T-cell (primary cell): ENCODE measurements at regions of chr5 and their contacts with region 1.

Region 1: GRCh38 chr5:95646554-95647431 is at the start of gene RFESD:
- DNase-seq: peak; percentile 82 to 96 (median 90)
- ATAC-seq: peak; percentile 95 to 96 (median 96)
- H3K4me3 ChIP-seq: peak within 1 kb of the TSS; percentile 77 to 81
- H3K4me3 Mint-ChIP-seq: peak within 1 kb of the TSS; percentile 84 to 88 (median 86)
- H3K27ac ChIP-seq: peak within 1 kb of the TSS; percentile 82
- H3K27ac Mint-ChIP-seq: peak within 1 kb of the TSS; percentile 85 to 86
- H3K4me1 ChIP-seq: peaks cover 17 to 22% of the 10 kb centered on the region in 2 experiments
- H3K4me1 Mint-ChIP-seq: peaks cover 31 to 43% (median 40%) of the 10 kb centered on the region in 3 donors
- H3K27me3 ChIP-seq: no peaks in the 10 kb centered on the region
- H3K27me3 Mint-ChIP-seq: no peaks in the 10 kb centered on the region
- total RNA-seq, gene RFESD: 4.2 to 8.3 (median 5.6) TPM

Region 2: GRCh38 chr5:95620870-95621837 is 25.6 kb before region 1 on chr5:
- CTCF ChIA-PET with region 1: interaction called, 4 to 32 read pairs
- POLR2A ChIA-PET with region 1: interaction called, 4 to 5 read pairs
- DNase-seq: peak in 31 of 35 experiments; percentile 2 to 59 (median 24)
- ATAC-seq: peak; percentile 54 to 63 (median 58)
- H3K4me3 ChIP-seq: peak overlapping the region; percentile 40 to 66
- H3K4me3 Mint-ChIP-seq: peak overlapping the region; percentile 80 to 84 (median 83)
- H3K27ac ChIP-seq: peak overlapping the region; percentile 57
- H3K27ac Mint-ChIP-seq: peak overlapping the region; percentile 85 to 93
- H3K4me1 ChIP-seq: peaks cover 38 to 41% of the 10 kb centered on the region in 2 experiments
- H3K4me1 Mint-ChIP-seq: peaks cover 56 to 73% (median 70%) of the 10 kb centered on the region in 3 donors
- H3K27me3 ChIP-seq: peaks cover 0 to 5% of the 10 kb centered on the region in 2 experiments
- H3K27me3 Mint-ChIP-seq: no peaks in the 10 kb centered on the region

Region 3: DNA sequence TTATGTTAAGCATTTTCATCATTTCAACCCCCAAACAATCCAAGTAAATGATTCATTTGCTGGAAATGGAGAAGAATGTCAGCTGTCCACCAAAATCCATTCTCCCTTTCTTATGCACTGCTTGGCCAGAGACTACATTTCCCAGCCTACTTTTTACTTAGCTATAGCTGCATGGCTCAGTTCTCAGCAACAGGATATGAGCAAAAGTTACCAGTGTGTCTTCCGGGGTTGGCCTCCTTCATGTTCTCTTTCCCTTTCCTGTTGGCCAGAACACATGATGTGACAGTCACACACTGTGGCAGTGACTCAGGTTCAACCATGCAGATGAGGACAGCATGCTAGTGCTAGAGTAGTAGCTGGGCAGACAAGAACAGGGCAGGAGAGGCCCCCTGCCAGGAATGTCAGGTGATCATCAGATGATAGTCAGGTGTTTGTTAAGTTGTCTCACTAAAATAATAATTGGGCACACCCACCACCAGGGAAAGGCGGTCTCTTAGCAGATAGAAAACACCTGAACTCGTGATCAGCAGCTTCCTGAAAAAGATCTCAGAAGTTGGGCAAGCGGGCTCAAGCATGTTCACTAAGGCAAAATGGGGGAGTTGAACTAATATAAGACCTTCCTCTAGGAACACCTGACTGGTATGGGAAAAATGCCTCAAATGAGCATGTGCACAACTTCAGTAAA is 14.7 kb before region 1 on chr5:
- CTCF ChIA-PET with region 1: interaction called, 6 to 12 read pairs
- POLR2A ChIA-PET with region 1: interaction called, 3 read pairs
- DNase-seq: peak; percentile 37 to 80 (median 62)
- ATAC-seq: peak; percentile 99 to 100 (median 100)
- H3K4me3 ChIP-seq: no peak overlapping the region
- H3K4me3 Mint-ChIP-seq: peak overlapping the region in 2 of 3 donors; percentile 46 to 48
- H3K27ac ChIP-seq: peak overlapping the region; percentile 77
- H3K27ac Mint-ChIP-seq: peak overlapping the region; percentile 90 to 98
- H3K4me1 ChIP-seq: peaks cover 7 to 11% of the 10 kb centered on the region in 2 experiments
- H3K4me1 Mint-ChIP-seq: peaks cover 24 to 31% (median 26%) of the 10 kb centered on the region in 3 donors
- H3K27me3 ChIP-seq: peaks cover 0 to 2% of the 10 kb centered on the region in 2 experiments
- H3K27me3 Mint-ChIP-seq: no peaks in the 10 kb centered on the region

Region 4: GRCh38 chr5:95664204-95664786 is 17.5 kb after region 1 on chr5:
- CTCF ChIA-PET with region 1: interaction called, 6 to 11 read pairs
- POLR2A ChIA-PET with region 1: interaction called in 1 of 2 experiments, 4 read pairs
- DNase-seq: peak in 19 of 35 experiments; percentile 4 to 64 (median 24)
- ATAC-seq: no peak
- H3K4me3 ChIP-seq: no peak overlapping the region
- H3K4me3 Mint-ChIP-seq: no peak overlapping the region
- H3K27ac ChIP-seq: no peak overlapping the region
- H3K27ac Mint-ChIP-seq: no peak overlapping the region
- H3K4me1 ChIP-seq: peaks cover 0 to 5% of the 10 kb centered on the region in 2 experiments
- H3K4me1 Mint-ChIP-seq: peaks cover 0 to 3% (median 0%) of the 10 kb centered on the region in 3 donors
- H3K27me3 ChIP-seq: no peaks in the 10 kb centered on the region
- H3K27me3 Mint-ChIP-seq: no peaks in the 10 kb centered on the region